Naive thymus-derived CD4-positive, alpha-beta T cell (primary cell): ENCODE measurements at regions of chr2 and their contacts with region 1.

Region 1: DNA sequence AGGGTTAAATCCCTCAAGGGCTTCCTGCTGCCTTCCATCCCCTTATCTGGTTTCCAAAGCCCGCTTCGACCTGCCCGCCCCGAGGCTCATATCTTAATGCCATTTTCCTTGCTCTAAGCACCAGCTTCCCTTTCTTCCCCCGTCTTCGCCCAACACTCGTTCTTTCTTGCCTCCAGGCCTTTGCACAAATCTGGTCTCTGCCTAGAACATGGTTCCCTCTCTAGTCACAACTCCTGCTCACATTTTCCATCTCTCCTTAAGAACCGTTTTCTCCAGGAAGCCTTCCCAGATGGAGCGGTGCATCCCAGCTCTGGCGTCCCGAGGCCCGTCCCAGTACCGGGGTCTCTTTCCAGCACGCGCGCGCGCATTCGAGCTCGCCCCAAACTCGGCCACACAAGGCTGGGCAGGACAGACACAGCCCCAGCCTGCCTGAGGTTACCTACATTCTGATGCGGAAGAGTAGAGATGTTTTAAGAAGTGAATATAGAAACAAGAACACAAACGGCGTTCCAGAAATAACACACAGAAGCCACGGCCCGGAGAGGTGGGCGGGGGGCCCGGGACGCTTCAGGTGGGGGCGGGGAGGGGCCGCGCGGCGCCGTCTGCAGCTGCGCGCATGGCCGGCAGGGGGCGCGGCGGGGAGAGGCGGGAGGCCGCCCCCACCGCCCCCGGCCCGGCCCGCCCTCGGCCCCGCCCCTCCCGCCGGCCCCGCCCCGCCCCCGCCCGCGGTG is at the start of gene DGKD:
- DNase-seq: peak; percentile 42 to 81 (median 69)
- ATAC-seq: peak; percentile 96
- H3K4me3 ChIP-seq: peak within 1 kb of the TSS; percentile 83
- H3K4me3 Mint-ChIP-seq: peak within 1 kb of the TSS; percentile 92 to 98 (median 94)
- H3K27ac ChIP-seq: peak within 1 kb of the TSS; percentile 72
- H3K27ac Mint-ChIP-seq: peak within 1 kb of the TSS; percentile 86 to 96 (median 92)
- H3K4me1 ChIP-seq: peaks cover 36 to 42% of the 10 kb centered on the region in 2 donors
- H3K4me1 Mint-ChIP-seq: peaks cover 57 to 74% (median 67%) of the 10 kb centered on the region in 7 donors
- H3K27me3 ChIP-seq: no peaks in the 10 kb centered on the region
- H3K27me3 Mint-ChIP-seq: no peaks in the 10 kb centered on the region
- total RNA-seq, gene DGKD: 61.6 to 252 (median 213) TPM

Region 2: GRCh38 chr2:233209533-233210171 is 144.3 kb before region 1 on chr2:
- CTCF ChIA-PET with region 1: no interaction called
- POLR2A ChIA-PET with region 1: no interaction called
- intact Hi-C with region 1: no loop called
- DNase-seq: no peak
- ATAC-seq: peak; percentile 19
- H3K4me3 ChIP-seq: no peak overlapping the region
- H3K4me3 Mint-ChIP-seq: no peak overlapping the region
- H3K27ac ChIP-seq: no peak overlapping the region
- H3K27ac Mint-ChIP-seq: peak overlapping the region; percentile 9 to 95 (median 50)
- H3K4me1 ChIP-seq: no peaks in the 10 kb centered on the region
- H3K4me1 Mint-ChIP-seq: peaks cover 5 to 22% (median 10%) of the 10 kb centered on the region in 7 donors
- H3K27me3 ChIP-seq: no peaks in the 10 kb centered on the region
- H3K27me3 Mint-ChIP-seq: no peaks in the 10 kb centered on the region

Region 3: GRCh38 chr2:233371641-233372040 is 17.7 kb after region 1 on chr2:
- CTCF ChIA-PET with region 1: no interaction called
- POLR2A ChIA-PET with region 1: interaction called, 7 read pairs
- intact Hi-C with region 1: loop called in 1 of 2 experiments (anchors 2 kb)
- DNase-seq: no peak
- ATAC-seq: no peak
- H3K4me3 ChIP-seq: no peak overlapping the region
- H3K4me3 Mint-ChIP-seq: no peak overlapping the region
- H3K27ac ChIP-seq: no peak overlapping the region
- H3K27ac Mint-ChIP-seq: peak overlapping the region in 3 of 9 donors; percentile 25 to 83 (median 57)
- H3K4me1 ChIP-seq: no peaks in the 10 kb centered on the region
- H3K4me1 Mint-ChIP-seq: peaks cover 7 to 72% (median 51%) of the 10 kb centered on the region in 7 donors
- H3K27me3 ChIP-seq: no peaks in the 10 kb centered on the region
- H3K27me3 Mint-ChIP-seq: no peaks in the 10 kb centered on the region

Region 4: GRCh38 chr2:233387667-233388528 is 34.0 kb after region 1 on chr2:
- CTCF ChIA-PET with region 1: interaction called, 14 read pairs
- POLR2A ChIA-PET with region 1: interaction called, 3 read pairs
- intact Hi-C with region 1: loop called in 1 of 2 experiments (anchors 2 kb)
- DNase-seq: no peak
- ATAC-seq: no peak
- H3K4me3 ChIP-seq: no peak overlapping the region
- H3K4me3 Mint-ChIP-seq: peak overlapping the region in 5 of 10 donors; percentile 7 to 73 (median 65)
- H3K27ac ChIP-seq: no peak overlapping the region
- H3K27ac Mint-ChIP-seq: peak overlapping the region in 6 of 9 donors; percentile 32 to 98 (median 91)
- H3K4me1 ChIP-seq: peaks cover 44 to 47% of the 10 kb centered on the region in 2 donors
- H3K4me1 Mint-ChIP-seq: peaks cover 39 to 76% (median 62%) of the 10 kb centered on the region in 7 donors
- H3K27me3 ChIP-seq: no peaks in the 10 kb centered on the region
- H3K27me3 Mint-ChIP-seq: no peaks in the 10 kb centered on the region